Cardiac septum (tissue), 1 donor: ENCODE measurements at regions of chr19 and their contacts with region 1.

Region 1: DNA sequence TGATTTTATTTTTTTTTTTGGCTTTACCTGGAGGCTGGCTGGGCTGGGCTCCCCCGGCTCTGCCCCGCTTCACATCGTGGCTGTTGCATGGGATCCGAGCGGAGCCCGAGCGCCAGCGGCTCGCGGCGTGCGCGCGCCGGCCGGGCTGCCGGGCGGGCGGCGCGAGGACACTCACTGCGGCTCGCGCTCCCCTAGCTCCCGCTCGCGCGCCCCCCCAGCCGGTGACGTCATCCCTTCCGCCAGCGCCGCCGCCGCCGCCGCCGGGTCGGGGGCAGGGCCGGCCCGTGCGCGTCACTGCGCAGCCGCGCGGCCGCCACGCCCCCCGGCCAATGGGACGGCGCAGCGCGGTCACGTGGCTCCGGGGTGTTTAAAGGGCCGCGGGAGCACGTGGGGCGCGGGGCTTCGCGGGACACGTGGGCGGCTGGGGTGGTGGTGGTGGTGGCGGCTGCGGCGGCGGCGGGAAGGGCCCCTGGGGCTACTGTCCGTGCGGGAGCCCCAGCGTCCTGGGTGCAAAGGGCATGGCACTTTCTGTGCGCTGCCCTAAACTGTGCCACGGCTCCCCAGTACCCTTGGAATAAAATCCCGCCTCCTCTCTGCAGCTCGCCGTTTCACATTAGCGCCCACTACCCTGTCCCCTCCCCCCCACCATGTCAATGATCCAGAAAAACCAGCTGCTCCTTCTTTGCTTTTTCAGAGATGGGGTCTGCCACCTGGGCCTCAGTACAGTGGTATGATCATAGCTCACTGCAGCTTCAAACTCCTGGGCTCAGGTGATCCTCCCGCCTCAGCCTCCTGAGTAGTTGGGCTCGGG is at the start of gene PTPRS:
- DNase-seq: peak; percentile 83
- total RNA-seq, gene PTPRS: 37.5 TPM

Region 2: DNA sequence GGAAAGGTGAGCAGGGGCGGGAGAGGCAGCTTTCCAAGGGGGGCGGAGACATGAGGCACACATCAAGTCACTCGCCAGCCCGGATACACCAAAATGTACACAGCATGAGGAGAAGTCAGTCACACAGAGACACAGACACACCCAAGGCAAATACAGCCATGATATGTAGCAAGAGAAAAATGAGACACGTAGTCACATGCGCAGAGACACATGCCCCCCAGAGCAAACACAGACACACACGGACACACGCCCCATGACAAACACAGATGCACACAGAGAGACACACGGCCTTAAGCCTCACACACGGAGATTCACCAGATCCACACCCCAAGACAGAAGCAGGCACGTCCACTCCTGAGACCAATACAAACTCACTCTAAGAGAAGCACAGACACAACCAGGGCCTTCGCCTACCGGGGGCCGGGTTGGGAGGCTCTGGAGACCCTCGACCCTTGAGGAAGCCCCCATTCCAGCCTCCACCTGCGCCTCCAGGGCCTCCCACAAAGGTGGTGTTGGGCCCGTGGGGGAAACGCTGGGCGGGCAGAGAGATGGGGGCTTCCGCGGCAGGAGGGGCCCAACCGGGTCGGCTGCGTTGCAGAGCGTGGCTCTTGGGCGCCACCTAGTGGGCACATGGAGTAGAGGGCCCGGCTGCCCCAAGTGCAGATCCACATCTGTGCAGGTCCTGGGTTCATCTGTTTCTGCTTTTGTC is 237.1 kb after region 1 on chr19:
- intact Hi-C with region 1: loop called (anchors 10 kb)
- DNase-seq: peak; percentile 87